Lower lobe of right lung (tissue), 2 donors: ENCODE measurements at regions of chr19 and their contacts with region 1.

Region 1: GRCh38 chr19:47707135-47707925 is 5.9 kb upstream of the EHD2 start:
- DNase-seq: peak; percentile 83
- ATAC-seq: peak; percentile 89 to 92
- H3K4me3 ChIP-seq: no peak overlapping the region
- H3K27ac ChIP-seq: no peak overlapping the region
- H3K4me1 ChIP-seq: no peaks in the 10 kb centered on the region
- H3K27me3 ChIP-seq: no peaks in the 10 kb centered on the region
- CTCF ChIP-seq: peak; percentile 88

Region 2: GRCh38 chr19:47436712-47437401 is 270.5 kb before region 1 on chr19:
- intact Hi-C with region 1: loop called (anchors 5 kb)
- DNase-seq: peak; percentile 84
- ATAC-seq: peak; percentile 95
- H3K4me3 ChIP-seq: no peak overlapping the region
- H3K27ac ChIP-seq: no peak overlapping the region
- H3K4me1 ChIP-seq: no peaks in the 10 kb centered on the region
- H3K27me3 ChIP-seq: peaks cover 58% of the 10 kb centered on the region
- CTCF ChIP-seq: peak; percentile 91